HEK293T (cell line): ENCODE measurements at regions of chr17 and their contacts with region 1.

Region 1: GRCh38 chr17:72580321-72581127 is 459.7 kb downstream of the SOX9 start:
- DNase-seq: no peak

Region 2: DNA sequence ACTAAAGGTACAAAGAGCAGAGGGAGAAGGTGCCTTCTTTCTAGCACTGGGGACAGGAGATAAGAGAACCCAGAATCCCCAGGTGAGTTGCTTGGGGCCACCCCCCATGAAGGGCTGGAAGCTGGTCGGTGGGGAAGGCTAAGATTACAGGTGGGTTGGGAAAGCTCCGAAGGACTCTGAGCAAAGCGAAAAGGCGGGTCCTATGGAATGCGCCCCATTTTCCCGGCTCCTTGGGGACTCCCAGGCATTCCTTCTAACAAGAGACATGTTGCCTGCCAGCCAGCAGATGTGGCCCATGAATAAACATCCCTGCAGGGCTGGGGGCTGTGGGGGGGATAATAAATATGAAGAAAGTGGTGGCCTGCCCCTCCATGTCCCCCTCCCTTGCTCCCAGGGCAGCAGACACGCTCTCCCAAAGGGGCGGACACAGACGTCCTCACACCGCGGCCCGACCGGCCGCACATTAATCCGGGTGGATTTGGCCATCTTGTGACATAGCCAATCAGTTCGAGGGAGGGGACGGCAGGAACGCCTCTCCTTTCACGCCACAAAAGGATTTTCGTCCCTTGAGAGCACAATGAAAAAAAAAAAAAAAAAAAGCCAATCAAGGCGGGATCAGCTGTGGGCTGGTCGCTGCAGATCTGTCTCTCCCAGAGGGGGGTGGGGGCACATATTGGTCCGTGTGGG is 361.2 kb before region 1 on chr17:
- CTCF ChIA-PET with region 1: no interaction called
- POLR2A ChIA-PET with region 1: no interaction called
- DNase-seq: no peak

Region 3: GRCh38 chr17:72592242-72592966 is 11.9 kb after region 1 on chr17:
- CTCF ChIA-PET with region 1: no interaction called
- POLR2A ChIA-PET with region 1: interaction called, 15 read pairs
- DNase-seq: peak; percentile 96

Region 4: GRCh38 chr17:72618001-72618509 is 37.5 kb after region 1 on chr17:
- CTCF ChIA-PET with region 1: no interaction called
- POLR2A ChIA-PET with region 1: no interaction called
- DNase-seq: no peak